PC-9 (cell line): ENCODE measurements at regions of chr17 and their contacts with region 1.

Region 1: DNA sequence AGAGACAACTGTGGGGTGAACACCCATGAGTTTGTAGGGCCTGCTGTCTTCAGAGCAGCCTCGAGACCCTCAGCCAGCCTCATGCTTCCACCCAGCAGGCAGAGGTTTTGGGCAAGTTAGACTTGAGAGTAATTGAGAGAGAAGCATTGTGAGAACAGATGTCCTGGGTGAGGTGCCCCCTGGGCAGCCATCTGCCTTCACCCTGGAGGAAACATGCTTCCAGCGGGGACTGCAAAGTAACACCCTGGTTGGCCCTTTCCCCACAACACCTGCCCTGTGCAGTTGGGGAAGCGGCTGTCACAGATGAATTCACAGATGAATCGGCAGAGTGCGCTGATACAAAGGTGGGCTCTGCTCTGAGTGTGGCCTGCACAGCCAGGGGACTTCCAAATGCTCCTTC is 23.4 kb downstream of the ATPAF2 start:
- DNase-seq: no peak
- H3K4me3 ChIP-seq: no peak overlapping the region
- H3K27ac ChIP-seq: no peak overlapping the region
- H3K4me1 ChIP-seq: no peaks in the 10 kb centered on the region
- H3K27me3 ChIP-seq: no peaks in the 10 kb centered on the region
- CTCF ChIP-seq: no peak

Region 2: GRCh38 chr17:17983376-17983775 is 32.2 kb before region 1 on chr17:
- CTCF ChIA-PET with region 1: no interaction called
- POLR2A ChIA-PET with region 1: no interaction called
- intact Hi-C with region 1: loop called (anchors 2 kb)
- DNase-seq: no peak
- H3K4me3 ChIP-seq: no peak overlapping the region
- H3K27ac ChIP-seq: no peak overlapping the region
- H3K4me1 ChIP-seq: no peaks in the 10 kb centered on the region; the same call in 1 of the 2 replicates
- H3K27me3 ChIP-seq: no peaks in the 10 kb centered on the region
- CTCF ChIP-seq: no peak

Region 3: DNA sequence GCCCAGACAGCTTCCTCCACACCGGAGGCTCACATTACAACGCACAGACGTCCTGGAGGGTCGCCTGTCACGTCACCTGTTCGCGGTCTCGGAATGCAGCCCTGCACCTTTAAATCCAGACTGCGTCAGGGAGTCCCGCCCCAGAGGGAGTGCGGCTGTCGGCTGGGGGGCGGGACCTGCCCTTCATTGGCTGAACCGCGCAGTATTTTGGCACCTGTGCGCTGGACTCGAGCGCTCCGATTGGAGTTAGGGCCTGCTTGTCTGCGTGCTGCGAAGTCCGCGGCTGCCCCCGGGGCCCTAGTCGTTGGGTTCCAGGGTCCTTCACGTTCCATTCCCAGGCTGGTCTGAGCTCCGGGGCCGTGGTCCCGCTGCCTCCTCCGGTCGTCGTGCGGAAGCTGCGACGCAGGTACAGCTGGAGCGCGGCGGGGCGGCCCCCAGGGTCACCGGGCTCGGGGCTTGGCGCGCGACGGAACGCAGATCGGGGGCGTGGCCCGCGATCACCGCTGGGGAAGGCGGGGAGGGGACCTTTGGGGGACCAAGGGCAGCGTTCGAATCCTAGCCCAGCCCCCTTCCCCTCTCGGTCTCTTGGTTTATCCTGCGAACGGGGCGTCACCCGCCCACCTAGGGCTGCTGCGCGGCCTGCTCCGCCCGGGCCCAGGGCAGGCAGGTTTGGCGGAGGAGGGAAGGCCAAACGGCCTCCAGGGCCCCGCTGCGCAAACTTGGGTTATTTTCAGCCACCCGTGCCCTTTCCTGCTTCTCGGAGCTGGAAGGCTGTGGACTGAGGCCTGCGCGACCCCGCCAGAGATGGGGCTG is 244.9 kb after region 1 on chr17 and contains the start of gene MIEF2:
- CTCF ChIA-PET with region 1: no interaction called
- POLR2A ChIA-PET with region 1: no interaction called
- intact Hi-C with region 1: no loop called
- DNase-seq: peak; percentile 93 to 98
- H3K4me3 ChIP-seq: peak within 1 kb of the TSS; percentile 84
- H3K27ac ChIP-seq: peak within 1 kb of the TSS; percentile 96
- H3K4me1 ChIP-seq: peaks cover 39% of the 10 kb centered on the region
- H3K27me3 ChIP-seq: no peaks in the 10 kb centered on the region
- CTCF ChIP-seq: no peak
- total RNA-seq, gene MIEF2: 29.6 and 33.0 TPM in 2 replicates